Endothelial cell of umbilical vein (primary cell): ENCODE measurements at regions of chr3 and their contacts with region 1.

Region 1: DNA sequence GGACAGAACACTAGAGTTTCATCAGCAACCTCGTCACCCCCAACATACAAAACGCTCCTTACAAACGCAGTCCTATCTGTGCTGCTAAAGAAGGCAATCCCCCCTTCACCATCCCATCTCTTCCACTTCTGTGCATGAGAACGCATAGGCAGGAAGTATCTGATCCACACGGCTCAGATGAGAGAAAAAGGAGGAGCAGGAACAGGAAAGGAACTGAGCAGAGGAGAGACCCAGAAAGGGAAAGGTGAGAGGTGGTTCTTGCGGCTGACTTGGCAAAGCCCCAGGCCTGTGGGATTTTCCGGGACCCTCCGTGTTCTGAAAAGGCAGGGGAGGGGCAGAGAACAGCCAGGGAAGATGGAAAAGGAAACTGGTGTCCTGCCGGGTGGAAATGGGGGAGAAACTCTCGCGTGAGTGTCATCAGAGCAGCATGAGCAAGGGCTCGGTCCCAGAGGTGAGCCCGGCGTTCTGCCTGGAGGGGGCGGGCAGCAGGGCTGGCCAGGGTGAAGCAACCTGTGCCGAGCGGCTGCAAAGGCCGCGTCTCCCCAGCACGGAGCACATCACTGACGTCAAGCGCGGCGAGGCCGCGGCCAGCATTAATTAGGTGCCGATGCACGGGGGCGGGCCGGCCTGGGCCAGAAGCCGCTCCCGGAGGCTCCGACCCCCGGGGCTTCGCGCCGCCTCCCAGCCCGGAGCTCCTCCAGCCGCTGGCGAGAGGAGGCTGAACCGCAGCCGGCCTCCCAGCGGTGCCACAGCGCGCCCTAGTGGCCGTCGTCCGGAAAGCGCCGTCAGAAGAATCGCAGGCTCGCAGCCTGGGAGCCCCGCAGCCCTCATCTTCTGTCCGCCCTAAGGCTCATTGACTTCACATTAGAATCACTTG is 35.8 kb downstream of the CPN2 start:
- DNase-seq: peak; percentile 84
- H3K4me3 ChIP-seq: peak overlapping the region; percentile 18 to 44 (median 37)
- H3K27ac ChIP-seq: peak overlapping the region; percentile 45
- H3K4me1 ChIP-seq: peaks cover 7% of the 10 kb centered on the region
- H3K27me3 ChIP-seq: peaks cover 4 to 5% of the 10 kb centered on the region in 2 experiments
- CTCF ChIP-seq: peak; percentile 86 to 92
- POLR2A ChIP-seq: no peak

Region 2: DNA sequence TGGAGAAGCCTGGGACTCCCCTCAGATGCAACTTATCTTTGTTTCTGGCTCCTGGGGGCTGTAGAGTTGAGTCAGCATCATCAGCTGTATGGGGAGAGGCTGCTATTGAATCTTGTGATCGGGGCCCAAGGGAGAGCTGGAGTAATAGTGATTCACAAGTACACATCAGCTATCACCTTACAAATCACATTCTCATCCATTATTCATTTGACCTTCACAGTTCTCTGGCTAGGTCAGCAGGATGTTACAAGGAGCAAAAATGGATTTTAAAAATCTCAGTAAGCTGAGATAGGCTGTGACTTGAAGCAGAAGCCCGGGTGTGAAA is 547.3 kb before region 1 on chr3:
- CTCF ChIA-PET with region 1: interaction called, 8 read pairs
- POLR2A ChIA-PET with region 1: no interaction called
- dilution Hi-C with region 1: loop called (anchors 25 kb)
- intact Hi-C with region 1: no loop called
- DNase-seq: no peak
- H3K4me3 ChIP-seq: no peak overlapping the region
- H3K27ac ChIP-seq: no peak overlapping the region
- H3K4me1 ChIP-seq: no peaks in the 10 kb centered on the region
- H3K27me3 ChIP-seq: peaks cover 0 to 13% of the 10 kb centered on the region in 2 experiments
- CTCF ChIP-seq: no peak
- POLR2A ChIP-seq: no peak

Region 3: GRCh38 chr3:193794002-193794881 is 521.1 kb before region 1 on chr3:
- CTCF ChIA-PET with region 1: interaction called, 15 read pairs
- POLR2A ChIA-PET with region 1: no interaction called
- dilution Hi-C with region 1: no loop called
- intact Hi-C with region 1: no loop called
- DNase-seq: peak; percentile 39
- H3K4me3 ChIP-seq: no peak overlapping the region
- H3K27ac ChIP-seq: no peak overlapping the region
- H3K4me1 ChIP-seq: peaks cover 3% of the 10 kb centered on the region
- H3K27me3 ChIP-seq: peaks cover 0 to 2% of the 10 kb centered on the region in 2 experiments
- CTCF ChIP-seq: no peak
- POLR2A ChIP-seq: no peak

Region 4: GRCh38 chr3:194070634-194071409 is 244.5 kb before region 1 on chr3:
- CTCF ChIA-PET with region 1: interaction called, 10 read pairs
- POLR2A ChIA-PET with region 1: no interaction called
- dilution Hi-C with region 1: no loop called
- intact Hi-C with region 1: no loop called
- DNase-seq: peak; percentile 98
- H3K4me3 ChIP-seq: peak overlapping the region in 2 of 3 experiments; percentile 23
- H3K27ac ChIP-seq: peak overlapping the region; percentile 87
- H3K4me1 ChIP-seq: peaks cover 15% of the 10 kb centered on the region
- H3K27me3 ChIP-seq: no peaks in the 10 kb centered on the region
- CTCF ChIP-seq: no peak
- POLR2A ChIP-seq: peak; percentile 45

Region 5: GRCh38 chr3:194141415-194142155 is 173.7 kb before region 1 on chr3:
- CTCF ChIA-PET with region 1: interaction called, 338 read pairs
- POLR2A ChIA-PET with region 1: interaction called, 9 read pairs
- dilution Hi-C with region 1: no loop called
- intact Hi-C with region 1: loop called (anchors 1 kb)
- DNase-seq: peak; percentile 93
- H3K4me3 ChIP-seq: no peak overlapping the region
- H3K27ac ChIP-seq: peak overlapping the region; percentile 99
- H3K4me1 ChIP-seq: peaks cover 40% of the 10 kb centered on the region
- H3K27me3 ChIP-seq: no peaks in the 10 kb centered on the region
- CTCF ChIP-seq: peak in 1 of 2 donors; percentile 14
- POLR2A ChIP-seq: no peak

Region 6: DNA sequence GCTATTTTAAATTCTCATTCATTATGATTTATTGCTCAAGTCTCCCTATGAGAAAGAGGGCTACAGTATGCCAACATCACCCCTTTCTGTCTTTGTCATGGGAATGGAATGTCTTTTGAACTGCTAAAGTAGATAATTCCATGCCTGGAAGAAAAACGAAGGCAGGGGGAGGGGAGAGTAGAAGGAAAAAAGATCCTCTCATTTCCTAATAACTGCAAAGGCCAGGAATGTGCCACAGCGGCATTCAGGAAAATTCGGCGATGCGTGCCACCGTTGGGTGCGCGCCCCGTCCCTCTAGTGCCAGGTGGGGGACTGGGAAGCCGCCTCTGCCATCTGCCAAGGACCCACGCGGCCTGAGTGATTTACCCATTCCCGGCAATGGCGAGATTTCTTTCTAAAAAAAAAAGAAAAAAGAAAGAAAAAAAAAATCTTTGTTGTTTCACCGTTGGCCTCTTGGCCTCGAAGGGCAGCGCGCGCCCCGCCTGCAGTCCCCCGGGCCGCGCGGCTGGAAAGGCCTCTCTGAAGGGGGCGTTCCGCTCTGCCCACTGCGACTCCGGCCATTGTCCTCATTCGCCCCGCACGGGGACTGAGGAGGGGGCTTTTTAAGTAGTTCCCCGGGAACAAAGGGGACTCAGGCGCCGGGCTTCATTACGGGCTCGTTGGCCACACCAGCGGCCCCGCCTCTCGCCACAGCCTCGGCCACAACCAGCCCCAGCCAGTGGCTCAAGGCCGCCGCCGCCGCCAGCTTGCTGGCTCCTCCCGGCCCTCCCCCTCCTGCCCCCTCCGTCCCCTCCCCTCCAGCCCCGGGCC is 18.7 kb before region 1 on chr3:
- CTCF ChIA-PET with region 1: interaction called, 19 read pairs
- POLR2A ChIA-PET with region 1: interaction called, 4 read pairs
- dilution Hi-C with region 1: no loop called
- intact Hi-C with region 1: no loop called
- DNase-seq: peak; percentile 82
- H3K4me3 ChIP-seq: peak overlapping the region in 2 of 3 experiments; percentile 2 to 13
- H3K27ac ChIP-seq: peak overlapping the region; percentile 90
- H3K4me1 ChIP-seq: peaks cover 13% of the 10 kb centered on the region
- H3K27me3 ChIP-seq: no peaks in the 10 kb centered on the region
- CTCF ChIP-seq: no peak
- POLR2A ChIP-seq: no peak

Region 7: DNA sequence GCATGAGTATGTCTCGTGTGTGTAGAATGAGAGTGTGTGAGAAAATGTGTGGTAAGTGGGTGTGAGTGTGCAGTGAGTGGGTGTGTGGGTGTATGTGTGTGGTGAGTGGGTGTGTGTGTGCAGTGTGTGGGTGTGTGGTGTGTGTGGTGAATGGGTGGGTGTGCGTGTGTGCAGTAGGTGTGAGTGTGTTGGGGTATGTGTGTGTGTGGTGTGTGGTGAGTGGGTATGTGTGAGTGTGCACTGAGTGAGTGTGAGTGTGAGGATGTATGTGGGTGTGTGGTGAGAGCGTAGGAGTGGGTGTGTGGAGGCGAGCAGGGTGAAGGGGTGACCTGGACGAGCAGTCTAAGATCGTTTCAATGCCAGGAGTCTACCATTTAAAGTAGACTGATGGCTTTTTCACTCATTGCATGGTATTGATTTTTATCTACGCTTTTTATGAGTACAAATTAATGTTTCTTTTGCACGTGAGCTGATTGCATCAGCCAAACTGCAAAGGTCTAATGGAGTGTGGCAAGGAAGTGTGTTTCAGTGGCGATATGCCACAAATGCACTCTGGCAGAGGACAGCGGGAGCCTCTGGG is 37.4 kb after region 1 on chr3:
- CTCF ChIA-PET with region 1: no interaction called
- POLR2A ChIA-PET with region 1: no interaction called
- dilution Hi-C with region 1: no loop called
- intact Hi-C with region 1: no loop called
- DNase-seq: no peak
- H3K4me3 ChIP-seq: no peak overlapping the region
- H3K27ac ChIP-seq: no peak overlapping the region
- H3K4me1 ChIP-seq: no peaks in the 10 kb centered on the region
- H3K27me3 ChIP-seq: peaks cover 0 to 2% of the 10 kb centered on the region in 2 experiments
- CTCF ChIP-seq: no peak
- POLR2A ChIP-seq: no peak

Region 8: GRCh38 chr3:194761384-194761783 is 446.1 kb after region 1 on chr3:
- CTCF ChIA-PET with region 1: no interaction called
- POLR2A ChIA-PET with region 1: no interaction called
- dilution Hi-C with region 1: no loop called
- intact Hi-C with region 1: no loop called
- DNase-seq: no peak
- H3K4me3 ChIP-seq: no peak overlapping the region
- H3K27ac ChIP-seq: no peak overlapping the region
- H3K4me1 ChIP-seq: no peaks in the 10 kb centered on the region
- H3K27me3 ChIP-seq: no peaks in the 10 kb centered on the region
- CTCF ChIP-seq: no peak
- POLR2A ChIP-seq: no peak

Region 9: DNA sequence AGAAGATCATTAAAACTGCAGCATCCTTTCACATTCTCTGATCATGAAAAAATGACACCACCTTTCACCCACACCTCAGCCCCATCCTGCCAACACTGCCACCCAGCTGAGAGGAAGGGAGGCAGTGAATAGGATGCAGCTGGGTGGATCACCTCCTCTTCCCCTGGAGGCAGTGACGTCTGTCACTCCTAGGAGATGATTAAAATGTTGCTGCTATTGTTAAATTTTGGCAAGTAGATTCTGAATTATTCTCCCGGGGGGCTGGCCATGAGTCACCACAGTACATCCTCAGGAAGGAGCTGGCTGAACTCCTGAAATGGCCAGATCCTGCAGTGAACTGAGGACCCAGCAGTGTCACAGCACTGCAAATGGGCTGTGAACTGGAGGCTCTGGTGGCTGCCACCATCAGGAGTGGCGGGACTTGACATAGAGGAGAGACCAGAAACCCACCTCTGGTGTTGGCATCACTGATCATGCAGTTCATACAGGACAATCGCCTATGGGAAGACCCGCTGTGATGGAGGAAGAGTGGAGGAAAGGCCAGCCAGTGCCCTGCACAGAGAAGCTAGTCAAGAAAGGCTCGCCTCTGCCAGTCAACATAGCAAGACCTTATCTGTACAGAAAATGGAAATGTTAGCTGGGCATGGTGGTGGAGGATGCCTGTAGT is 569.5 kb after region 1 on chr3:
- CTCF ChIA-PET with region 1: no interaction called
- POLR2A ChIA-PET with region 1: no interaction called
- dilution Hi-C with region 1: no loop called
- intact Hi-C with region 1: no loop called
- DNase-seq: peak; percentile 83
- H3K4me3 ChIP-seq: no peak overlapping the region
- H3K27ac ChIP-seq: peak overlapping the region; percentile 66
- H3K4me1 ChIP-seq: peaks cover 20% of the 10 kb centered on the region
- H3K27me3 ChIP-seq: no peaks in the 10 kb centered on the region
- CTCF ChIP-seq: peak in 1 of 2 donors; percentile 1
- POLR2A ChIP-seq: no peak